ENCODE measurements at regions of chr21 and their contacts with region 1.

Region 1: GRCh38 chr21:42593007-42593806 is 60.2 kb upstream of the PDE9A start:
- DNase-seq: peak; percentile 84
- ATAC-seq: peak; percentile 96
- H3K4me3 Mint-ChIP-seq: no peak overlapping the region
- H3K27ac Mint-ChIP-seq: no peak overlapping the region
- H3K4me1 Mint-ChIP-seq: peaks cover 14% of the 10 kb centered on the region
- H3K27me3 Mint-ChIP-seq: peaks cover 21% of the 10 kb centered on the region
- CTCF ChIP-seq: peak; percentile 61

Region 2: GRCh38 chr21:42579456-42580075 is 13.6 kb before region 1 on chr21:
- CTCF ChIA-PET with region 1: interaction called, 12 read pairs
- POLR2A ChIA-PET with region 1: no interaction called
- DNase-seq: no peak
- ATAC-seq: no peak
- H3K4me3 Mint-ChIP-seq: no peak overlapping the region
- H3K27ac Mint-ChIP-seq: no peak overlapping the region
- H3K4me1 Mint-ChIP-seq: no peaks in the 10 kb centered on the region
- H3K27me3 Mint-ChIP-seq: no peaks in the 10 kb centered on the region
- CTCF ChIP-seq: no peak

Region 3: GRCh38 chr21:42641311-42642218 is 48.4 kb after region 1 on chr21:
- CTCF ChIA-PET with region 1: interaction called, 17 read pairs
- POLR2A ChIA-PET with region 1: interaction called, 3 read pairs
- DNase-seq: no peak
- ATAC-seq: peak; percentile 71
- H3K4me3 Mint-ChIP-seq: no peak overlapping the region
- H3K27ac Mint-ChIP-seq: no peak overlapping the region
- H3K4me1 Mint-ChIP-seq: peaks cover 31% of the 10 kb centered on the region
- H3K27me3 Mint-ChIP-seq: peaks cover 13% of the 10 kb centered on the region
- CTCF ChIP-seq: no peak

Region 4: DNA sequence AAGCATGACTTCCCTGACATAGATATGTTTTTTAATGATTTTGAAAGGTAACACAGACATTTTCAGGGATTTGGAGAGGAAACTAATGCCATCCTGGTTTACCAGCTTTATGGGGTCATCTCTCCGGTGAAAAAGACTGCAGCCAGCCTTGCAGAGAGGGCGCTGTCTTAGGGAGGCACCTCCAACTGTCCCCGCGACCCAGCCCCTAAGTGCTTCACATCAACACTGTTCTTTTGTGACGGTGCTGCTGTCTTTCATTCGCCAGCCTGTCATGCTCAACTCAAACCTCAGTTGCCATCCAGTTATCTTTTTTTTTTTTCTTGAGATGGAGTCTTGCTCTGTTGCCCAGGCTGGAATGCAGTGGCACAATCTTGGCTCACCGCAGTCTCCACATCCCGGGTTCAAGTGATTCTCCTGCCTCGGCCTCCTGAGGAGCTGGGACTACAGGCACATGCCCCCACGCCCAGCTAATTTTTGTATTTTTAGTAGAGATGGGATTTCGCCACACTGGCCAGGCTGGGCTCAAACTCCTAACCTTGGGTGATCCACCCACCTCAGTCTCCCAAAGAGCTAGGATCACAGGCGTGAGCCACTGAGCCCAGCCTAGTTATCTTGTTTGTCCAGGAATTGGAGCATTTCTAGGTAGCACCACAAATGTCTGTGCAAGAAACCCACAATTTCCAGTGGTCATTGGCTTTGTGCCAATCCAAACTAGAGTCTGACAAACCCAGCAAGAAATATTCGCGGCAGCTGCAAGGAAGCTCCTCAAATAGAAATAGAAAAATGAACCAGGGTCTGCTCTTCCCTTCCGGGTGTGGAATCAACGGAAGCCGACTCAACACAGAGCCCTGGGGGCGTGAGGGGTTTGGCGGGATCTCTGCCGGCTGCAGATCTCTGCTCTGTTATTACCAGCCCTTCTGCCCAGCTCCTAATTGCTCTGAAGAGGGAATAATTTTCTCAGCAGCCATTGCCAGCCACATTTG is 84.4 kb after region 1 on chr21:
- CTCF ChIA-PET with region 1: interaction called, 26 read pairs
- POLR2A ChIA-PET with region 1: no interaction called
- DNase-seq: no peak
- ATAC-seq: no peak
- H3K4me3 Mint-ChIP-seq: no peak overlapping the region
- H3K27ac Mint-ChIP-seq: no peak overlapping the region
- H3K4me1 Mint-ChIP-seq: peaks cover 44% of the 10 kb centered on the region
- H3K27me3 Mint-ChIP-seq: no peaks in the 10 kb centered on the region; the same call in 1 of the 2 replicates
- CTCF ChIP-seq: no peak

Region 5: GRCh38 chr21:42781150-42781970 is 188.2 kb after region 1 on chr21:
- CTCF ChIA-PET with region 1: interaction called, 10 read pairs
- POLR2A ChIA-PET with region 1: no interaction called
- DNase-seq: peak; percentile 61
- ATAC-seq: peak; percentile 43
- H3K4me3 Mint-ChIP-seq: peak overlapping the region; percentile 76
- H3K27ac Mint-ChIP-seq: 0 out of 2 replicates have a peak overlapping the region, but pooled peaks have one; percentile 61
- H3K4me1 Mint-ChIP-seq: peaks cover 62% of the 10 kb centered on the region
- H3K27me3 Mint-ChIP-seq: peaks cover 42% of the 10 kb centered on the region
- CTCF ChIP-seq: no peak

Measured in WTC11 (cell line).